Activated CD8-positive, alpha-beta T cell treated with anti-CD3 and anti-CD28 coated beads for 36 hours (primary cell): ENCODE measurements at regions of chr2 and their contacts with region 1.

Region 1: GRCh38 chr2:126527836-126528507 is 128.0 kb upstream of the GYPC start:
- DNase-seq: peak; percentile 87
- ATAC-seq: peak; percentile 84
- H3K4me3 Mint-ChIP-seq: no peak overlapping the region
- H3K27ac Mint-ChIP-seq: no peak overlapping the region
- H3K4me1 Mint-ChIP-seq: no peaks in the 10 kb centered on the region
- H3K27me3 Mint-ChIP-seq: no peaks in the 10 kb centered on the region
- CTCF ChIP-seq: peak; percentile 64

Region 2: GRCh38 chr2:126515471-126515870 is 12.5 kb before region 1 on chr2:
- CTCF ChIA-PET with region 1: interaction called, 11 read pairs
- POLR2A ChIA-PET with region 1: no interaction called
- intact Hi-C with region 1: no loop called
- DNase-seq: no peak
- ATAC-seq: no peak
- H3K4me3 Mint-ChIP-seq: no peak overlapping the region
- H3K27ac Mint-ChIP-seq: no peak overlapping the region
- H3K4me1 Mint-ChIP-seq: no peaks in the 10 kb centered on the region
- H3K27me3 Mint-ChIP-seq: no peaks in the 10 kb centered on the region
- CTCF ChIP-seq: no peak

Region 3: DNA sequence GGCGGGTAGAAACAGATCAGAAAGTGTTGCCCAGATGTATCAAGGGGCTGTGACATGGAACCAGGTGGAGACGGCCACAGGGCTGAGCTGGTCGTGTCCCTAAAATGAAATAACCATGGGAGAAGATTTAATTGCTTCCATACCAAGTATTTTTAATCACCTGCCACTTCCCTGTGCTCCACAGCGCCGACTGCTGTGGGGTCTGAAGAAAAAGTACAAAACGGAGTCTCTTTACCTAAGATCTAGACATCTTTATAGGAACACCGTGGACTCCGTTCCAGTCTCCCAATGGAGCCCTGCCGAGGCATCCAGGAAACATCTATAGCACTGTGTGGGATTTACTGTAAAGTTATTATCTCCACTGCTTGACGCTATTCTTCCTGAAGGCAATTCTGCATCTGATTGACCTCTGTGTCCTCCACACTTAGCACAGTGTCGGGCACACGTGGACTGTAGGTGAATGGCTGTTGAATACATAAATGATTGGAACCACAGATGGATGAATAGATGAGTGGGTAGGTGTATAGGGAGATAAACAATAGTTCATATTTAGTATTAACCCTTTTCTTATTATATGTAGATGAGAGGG is 106.4 kb after region 1 on chr2:
- CTCF ChIA-PET with region 1: interaction called, 12 read pairs
- POLR2A ChIA-PET with region 1: no interaction called
- intact Hi-C with region 1: no loop called
- DNase-seq: peak; percentile 44
- ATAC-seq: no peak
- H3K4me3 Mint-ChIP-seq: no peak overlapping the region
- H3K27ac Mint-ChIP-seq: no peak overlapping the region
- H3K4me1 Mint-ChIP-seq: no peaks in the 10 kb centered on the region
- H3K27me3 Mint-ChIP-seq: no peaks in the 10 kb centered on the region
- CTCF ChIP-seq: peak; percentile 71

Region 4: DNA sequence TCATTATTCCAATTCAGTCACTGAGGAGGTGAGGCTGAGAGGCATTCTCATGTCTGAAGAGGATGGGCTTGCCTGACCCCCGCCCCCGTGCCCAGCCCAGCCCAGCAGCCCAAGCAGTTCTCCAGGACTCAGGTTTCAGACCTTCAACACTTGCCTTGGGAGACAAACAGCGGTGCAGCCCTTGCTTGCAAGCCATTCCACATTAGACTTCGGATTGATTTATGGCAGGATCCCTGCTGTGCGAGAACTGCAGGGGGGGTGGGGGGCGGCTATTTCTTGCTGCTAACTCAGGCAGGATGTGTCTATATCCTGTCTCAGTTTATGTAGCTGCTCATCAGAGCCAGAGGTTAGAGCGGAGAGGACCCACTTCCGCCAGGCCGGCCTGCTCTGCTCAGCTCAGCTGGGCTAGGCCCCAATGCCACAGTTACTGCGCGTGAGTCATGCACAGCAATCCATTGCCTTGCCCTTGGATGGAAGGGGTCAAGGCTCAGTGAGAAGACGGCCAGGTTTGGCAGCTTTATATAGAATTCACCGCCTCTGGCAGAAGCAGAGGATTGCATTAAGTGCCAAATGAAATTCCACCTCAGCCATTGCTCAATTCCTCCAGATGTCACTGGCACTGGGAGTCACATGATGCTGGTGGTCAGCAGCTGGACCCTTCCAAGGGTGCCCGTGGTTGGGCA is 129.8 kb after region 1 on chr2:
- CTCF ChIA-PET with region 1: interaction called, 15 read pairs
- POLR2A ChIA-PET with region 1: no interaction called
- intact Hi-C with region 1: no loop called
- DNase-seq: peak; percentile 90
- ATAC-seq: peak; percentile 74
- H3K4me3 Mint-ChIP-seq: peak overlapping the region; percentile 97
- H3K27ac Mint-ChIP-seq: peak overlapping the region; percentile 100
- H3K4me1 Mint-ChIP-seq: peaks cover 60% of the 10 kb centered on the region
- H3K27me3 Mint-ChIP-seq: no peaks in the 10 kb centered on the region
- CTCF ChIP-seq: no peak

Region 5: DNA sequence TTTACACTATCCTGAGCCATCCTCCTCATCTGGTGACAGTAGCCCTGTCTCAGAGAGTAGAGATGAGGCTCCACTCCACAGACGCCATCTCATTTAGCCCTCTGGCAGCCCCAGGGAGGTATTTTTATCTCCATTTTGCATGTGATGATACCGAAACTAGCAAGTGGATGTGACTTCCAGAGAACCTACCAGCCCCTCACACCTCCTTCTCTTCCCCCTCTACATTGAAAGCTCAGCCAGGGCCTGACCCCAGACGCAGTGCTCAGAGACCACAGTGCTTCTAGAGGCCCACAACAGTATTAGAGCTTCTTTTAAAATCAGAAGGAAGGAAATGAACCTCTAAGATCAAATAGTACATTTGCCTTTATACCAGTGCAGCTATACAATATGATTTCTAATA is 136.3 kb after region 1 on chr2:
- CTCF ChIA-PET with region 1: interaction called, 15 read pairs
- POLR2A ChIA-PET with region 1: no interaction called
- intact Hi-C with region 1: no loop called
- DNase-seq: peak; percentile 75
- ATAC-seq: peak; percentile 82
- H3K4me3 Mint-ChIP-seq: peak overlapping the region; percentile 68
- H3K27ac Mint-ChIP-seq: peak overlapping the region; percentile 94
- H3K4me1 Mint-ChIP-seq: peaks cover 94% of the 10 kb centered on the region
- H3K27me3 Mint-ChIP-seq: no peaks in the 10 kb centered on the region
- CTCF ChIP-seq: no peak

Region 6: DNA sequence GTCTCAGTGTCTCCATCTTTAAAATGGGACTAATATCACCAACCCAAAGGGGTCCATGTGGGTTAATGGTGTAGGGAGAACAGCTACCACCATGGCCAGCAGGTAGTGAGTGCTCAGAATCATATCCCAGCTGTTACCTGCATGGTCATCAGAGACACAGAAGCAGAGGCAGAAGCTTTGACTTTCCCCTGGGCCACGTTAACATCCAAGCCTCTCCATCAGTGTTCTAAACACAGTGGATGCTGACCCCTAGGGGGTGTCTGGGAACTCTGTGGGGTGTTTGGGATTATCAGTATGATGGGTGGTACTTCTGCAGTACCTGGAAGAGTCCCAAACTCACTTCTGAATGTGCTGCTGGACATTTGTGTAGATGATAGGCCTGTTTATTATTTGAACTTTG is 221.6 kb after region 1 on chr2:
- CTCF ChIA-PET with region 1: interaction called, 18 read pairs
- POLR2A ChIA-PET with region 1: no interaction called
- intact Hi-C with region 1: no loop called
- DNase-seq: peak; percentile 28
- ATAC-seq: peak; percentile 60
- H3K4me3 Mint-ChIP-seq: no peak overlapping the region
- H3K27ac Mint-ChIP-seq: no peak overlapping the region
- H3K4me1 Mint-ChIP-seq: peaks cover 22% of the 10 kb centered on the region
- H3K27me3 Mint-ChIP-seq: no peaks in the 10 kb centered on the region
- CTCF ChIP-seq: no peak

Region 7: GRCh38 chr2:126971481-126972278 is 443.7 kb after region 1 on chr2:
- CTCF ChIA-PET with region 1: interaction called, 16 read pairs
- POLR2A ChIA-PET with region 1: no interaction called
- intact Hi-C with region 1: no loop called
- DNase-seq: peak; percentile 78
- ATAC-seq: peak; percentile 98
- H3K4me3 Mint-ChIP-seq: peak overlapping the region; percentile 44
- H3K27ac Mint-ChIP-seq: no peak overlapping the region
- H3K4me1 Mint-ChIP-seq: peaks cover 2% of the 10 kb centered on the region
- H3K27me3 Mint-ChIP-seq: peaks cover 30% of the 10 kb centered on the region
- CTCF ChIP-seq: peak; percentile 94